Panc1 (cell line): ENCODE measurements at regions of chr2 and their contacts with region 1.

Region 1: GRCh38 chr2:8408560-8409460 is 273.0 kb upstream of the ID2 start:
- DNase-seq: no peak
- ATAC-seq: no peak
- H3K4me3 ChIP-seq: no peak overlapping the region
- H3K27ac ChIP-seq: no peak overlapping the region
- H3K4me1 ChIP-seq: no peaks in the 10 kb centered on the region
- H3K27me3 ChIP-seq: no peaks in the 10 kb centered on the region
- CTCF ChIP-seq: no peak

Region 2: GRCh38 chr2:8202132-8202531 is 206.7 kb before region 1 on chr2:
- CTCF ChIA-PET with region 1: no interaction called
- POLR2A ChIA-PET with region 1: interaction called, 14 read pairs
- in situ Hi-C with region 1: no loop called
- intact Hi-C with region 1: no loop called
- DNase-seq: no peak
- ATAC-seq: no peak
- H3K4me3 ChIP-seq: no peak overlapping the region
- H3K27ac ChIP-seq: no peak overlapping the region
- H3K4me1 ChIP-seq: no peaks in the 10 kb centered on the region
- H3K27me3 ChIP-seq: 0 out of 2 replicates have a peak, but pooled peaks cover 4% of the 10 kb centered on the region
- CTCF ChIP-seq: no peak